B cell (primary cell): ENCODE measurements at regions of chr17 and their contacts with region 1.

Region 1: DNA sequence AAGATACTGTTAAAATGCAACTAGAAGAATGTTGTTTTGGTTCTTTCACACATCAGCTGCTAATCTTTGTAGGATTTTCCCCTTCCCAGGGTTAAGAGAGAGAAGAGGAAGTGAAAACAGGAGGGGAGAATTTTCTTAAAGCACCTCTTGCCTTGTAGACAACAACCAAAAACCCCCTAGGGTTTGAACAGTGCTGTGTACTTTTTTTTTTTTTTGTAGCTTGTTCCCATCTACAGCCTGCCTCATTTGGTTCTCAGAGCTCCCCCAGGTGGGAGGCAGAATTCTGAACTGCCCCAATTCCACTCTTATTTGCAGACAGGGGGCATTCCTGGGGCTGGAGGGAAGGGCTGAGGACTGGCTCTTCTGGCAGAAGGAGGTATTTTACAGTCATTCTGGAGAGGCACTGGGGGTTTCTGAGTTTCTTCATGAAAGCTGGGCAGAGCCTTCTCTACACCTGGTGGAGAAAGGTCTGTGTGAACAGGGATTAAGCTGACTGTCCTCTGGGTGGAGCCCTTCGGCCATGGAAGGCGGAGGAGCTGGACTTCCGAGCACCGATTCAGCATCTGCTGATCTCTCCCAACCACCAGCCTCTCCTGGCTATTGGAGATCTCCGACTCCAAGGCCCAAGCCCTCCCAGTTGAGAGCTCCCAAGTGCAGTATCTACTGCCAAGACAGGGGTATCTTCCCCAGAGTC is 32.2 kb downstream of the SMARCE1 start:
- DNase-seq: peak; percentile 92
- ATAC-seq: peak; percentile 85
- H3K4me3 ChIP-seq: peak overlapping the region in 3 of 5 experiments; percentile 12 to 27 (median 25)
- H3K4me3 Mint-ChIP-seq: peak overlapping the region; percentile 73
- H3K27ac ChIP-seq: peak overlapping the region; percentile 90 to 96
- H3K27ac Mint-ChIP-seq: peak overlapping the region; percentile 94
- H3K4me1 ChIP-seq: peaks cover 58 to 63% of the 10 kb centered on the region in 2 donors
- H3K4me1 Mint-ChIP-seq: peaks cover 68% of the 10 kb centered on the region
- H3K27me3 ChIP-seq: no peaks in the 10 kb centered on the region
- H3K27me3 Mint-ChIP-seq: no peaks in the 10 kb centered on the region
- CTCF ChIP-seq: peak; percentile 68

Region 2: GRCh38 chr17:40251576-40251975 is 363.9 kb before region 1 on chr17:
- CTCF ChIA-PET with region 1: no interaction called
- POLR2A ChIA-PET with region 1: no interaction called
- intact Hi-C with region 1: no loop called
- DNase-seq: no peak
- ATAC-seq: no peak
- H3K4me3 ChIP-seq: no peak overlapping the region
- H3K4me3 Mint-ChIP-seq: no peak overlapping the region
- H3K27ac ChIP-seq: no peak overlapping the region
- H3K27ac Mint-ChIP-seq: no peak overlapping the region
- H3K4me1 ChIP-seq: no peaks in the 10 kb centered on the region
- H3K4me1 Mint-ChIP-seq: peaks cover 16% of the 10 kb centered on the region
- H3K27me3 ChIP-seq: no peaks in the 10 kb centered on the region
- H3K27me3 Mint-ChIP-seq: no peaks in the 10 kb centered on the region
- CTCF ChIP-seq: no peak

Region 3: GRCh38 chr17:40399185-40399584 is 216.3 kb before region 1 on chr17:
- CTCF ChIA-PET with region 1: interaction called, 14 read pairs
- POLR2A ChIA-PET with region 1: no interaction called
- intact Hi-C with region 1: no loop called
- DNase-seq: peak; percentile 74
- ATAC-seq: peak; percentile 54
- H3K4me3 ChIP-seq: no peak overlapping the region
- H3K4me3 Mint-ChIP-seq: no peak overlapping the region
- H3K27ac ChIP-seq: no peak overlapping the region
- H3K27ac Mint-ChIP-seq: no peak overlapping the region
- H3K4me1 ChIP-seq: peaks cover 0 to 8% of the 10 kb centered on the region in 2 donors
- H3K4me1 Mint-ChIP-seq: peaks cover 7% of the 10 kb centered on the region
- H3K27me3 ChIP-seq: no peaks in the 10 kb centered on the region
- H3K27me3 Mint-ChIP-seq: no peaks in the 10 kb centered on the region
- CTCF ChIP-seq: peak; percentile 88

Region 4: DNA sequence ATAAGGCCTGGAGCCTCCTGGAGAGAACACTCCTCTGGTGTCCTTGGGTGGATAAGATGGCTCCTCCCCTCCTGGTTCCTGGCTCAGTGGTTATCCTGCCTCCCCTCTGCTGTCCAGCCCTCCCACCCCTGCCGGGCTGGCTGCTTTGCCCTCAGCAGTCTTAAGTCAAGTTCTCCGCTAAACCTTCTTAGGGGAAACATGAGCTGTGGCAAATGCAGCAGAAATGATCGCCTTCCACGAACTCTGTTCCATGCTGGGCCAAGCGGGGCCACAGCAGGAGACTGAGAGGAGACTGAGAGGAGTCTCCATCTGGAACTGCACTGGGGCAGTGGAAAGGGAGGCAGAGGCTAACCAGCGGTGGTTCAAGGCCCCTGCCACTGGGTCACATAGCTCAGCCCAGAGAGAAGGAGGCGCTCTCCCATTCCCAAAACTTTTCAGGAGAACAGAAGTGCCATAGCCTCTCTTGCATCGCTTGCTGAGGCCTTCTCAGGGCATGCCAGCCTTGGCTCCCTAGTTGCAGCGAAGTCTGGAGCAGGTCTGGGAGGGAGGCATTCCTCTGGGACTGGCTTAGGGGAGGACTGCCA is 140.9 kb before region 1 on chr17:
- CTCF ChIA-PET with region 1: interaction called, 12 read pairs
- POLR2A ChIA-PET with region 1: no interaction called
- intact Hi-C with region 1: no loop called
- DNase-seq: no peak
- ATAC-seq: no peak
- H3K4me3 ChIP-seq: no peak overlapping the region
- H3K4me3 Mint-ChIP-seq: no peak overlapping the region
- H3K27ac ChIP-seq: no peak overlapping the region
- H3K27ac Mint-ChIP-seq: no peak overlapping the region
- H3K4me1 ChIP-seq: peaks cover 12 to 23% of the 10 kb centered on the region in 2 donors
- H3K4me1 Mint-ChIP-seq: peaks cover 10% of the 10 kb centered on the region
- H3K27me3 ChIP-seq: peaks cover 0 to 4% (median 1%) of the 10 kb centered on the region in 4 experiments
- H3K27me3 Mint-ChIP-seq: no peaks in the 10 kb centered on the region
- CTCF ChIP-seq: no peak

Region 5: GRCh38 chr17:40542558-40543411 is 72.7 kb before region 1 on chr17:
- CTCF ChIA-PET with region 1: interaction called, 634 read pairs
- POLR2A ChIA-PET with region 1: interaction called, 29 read pairs
- intact Hi-C with region 1: loop called (anchors 1 kb)
- DNase-seq: peak; percentile 71
- ATAC-seq: peak; percentile 11
- H3K4me3 ChIP-seq: no peak overlapping the region
- H3K4me3 Mint-ChIP-seq: peak overlapping the region; percentile 63
- H3K27ac ChIP-seq: peak overlapping the region in 1 of 2 donors; percentile 30
- H3K27ac Mint-ChIP-seq: peak overlapping the region; percentile 89
- H3K4me1 ChIP-seq: peaks cover 48 to 61% of the 10 kb centered on the region in 2 donors
- H3K4me1 Mint-ChIP-seq: peaks cover 64% of the 10 kb centered on the region
- H3K27me3 ChIP-seq: no peaks in the 10 kb centered on the region
- H3K27me3 Mint-ChIP-seq: no peaks in the 10 kb centered on the region
- CTCF ChIP-seq: no peak

Region 6: GRCh38 chr17:40564883-40565768 is 50.3 kb before region 1 on chr17 and contains the start of gene CCR7:
- CTCF ChIA-PET with region 1: interaction called, 634 read pairs
- POLR2A ChIA-PET with region 1: interaction called, 132 read pairs
- intact Hi-C with region 1: loop called (anchors 1 kb)
- DNase-seq: peak; percentile 92
- ATAC-seq: peak; percentile 69
- H3K4me3 ChIP-seq: peak within 1 kb of the TSS; percentile 63 to 94 (median 89)
- H3K4me3 Mint-ChIP-seq: peak within 1 kb of the TSS; percentile 92
- H3K27ac ChIP-seq: peak within 1 kb of the TSS; percentile 92 to 98
- H3K27ac Mint-ChIP-seq: peak within 1 kb of the TSS; percentile 94
- H3K4me1 ChIP-seq: peaks cover 58 to 67% of the 10 kb centered on the region in 2 donors
- H3K4me1 Mint-ChIP-seq: peaks cover 51% of the 10 kb centered on the region
- H3K27me3 ChIP-seq: no peaks in the 10 kb centered on the region
- H3K27me3 Mint-ChIP-seq: no peaks in the 10 kb centered on the region
- CTCF ChIP-seq: no peak
- total RNA-seq, gene CCR7: 451 and 481 TPM in 2 replicates

Region 7: DNA sequence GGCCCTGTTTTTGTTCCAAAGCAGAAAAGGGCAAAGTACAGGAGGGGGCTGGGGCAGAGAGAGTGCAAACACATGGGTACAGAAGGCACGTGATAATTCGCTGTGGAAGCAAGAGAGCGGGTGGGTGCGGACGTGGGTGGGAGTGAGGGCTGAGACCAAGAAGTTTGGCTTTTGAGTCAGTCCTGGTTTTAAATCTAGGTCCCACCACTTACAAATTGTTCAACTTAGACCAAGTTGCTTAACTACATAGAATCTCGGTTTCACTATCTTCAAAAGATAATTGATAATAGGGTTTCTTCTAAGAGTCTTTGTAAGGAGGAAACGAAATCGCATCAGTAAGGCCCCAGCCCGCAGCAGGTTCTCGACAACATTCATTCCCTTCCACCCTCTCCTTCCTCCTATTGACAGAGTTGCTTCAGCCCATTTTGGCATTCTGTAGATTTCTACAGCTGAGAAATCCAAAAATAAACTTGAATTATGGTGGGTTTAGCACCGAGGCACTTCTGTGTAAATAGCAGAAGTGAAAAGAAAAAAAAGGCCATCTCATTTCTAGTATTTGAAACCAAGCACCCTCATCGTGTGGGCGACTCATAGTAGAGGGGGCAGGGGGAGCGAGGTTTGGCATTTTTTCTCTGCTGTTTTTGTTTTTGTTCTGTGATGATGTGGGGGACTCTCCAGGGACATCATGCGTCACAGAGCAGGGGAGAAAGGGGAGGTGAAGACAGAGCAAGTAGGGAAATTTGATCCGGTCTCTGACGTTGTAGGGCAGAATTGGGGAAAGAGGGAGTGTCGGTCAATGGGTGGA is 16.6 kb before region 1 on chr17:
- CTCF ChIA-PET with region 1: interaction called, 45 read pairs
- POLR2A ChIA-PET with region 1: interaction called, 22 read pairs
- intact Hi-C with region 1: loop called (anchors 1 kb)
- DNase-seq: peak; percentile 97
- ATAC-seq: peak; percentile 83
- H3K4me3 ChIP-seq: peak overlapping the region in 3 of 5 experiments; percentile 12 to 37 (median 27)
- H3K4me3 Mint-ChIP-seq: peak overlapping the region; percentile 52
- H3K27ac ChIP-seq: peak overlapping the region; percentile 92 to 96
- H3K27ac Mint-ChIP-seq: peak overlapping the region; percentile 87
- H3K4me1 ChIP-seq: peaks cover 72 to 76% of the 10 kb centered on the region in 2 donors
- H3K4me1 Mint-ChIP-seq: peaks cover 85% of the 10 kb centered on the region
- H3K27me3 ChIP-seq: no peaks in the 10 kb centered on the region
- H3K27me3 Mint-ChIP-seq: no peaks in the 10 kb centered on the region
- CTCF ChIP-seq: no peak

Region 8: GRCh38 chr17:40659911-40660310 is 44.5 kb after region 1 on chr17:
- CTCF ChIA-PET with region 1: no interaction called
- POLR2A ChIA-PET with region 1: no interaction called
- intact Hi-C with region 1: no loop called
- DNase-seq: no peak
- ATAC-seq: no peak
- H3K4me3 ChIP-seq: no peak overlapping the region
- H3K4me3 Mint-ChIP-seq: no peak overlapping the region
- H3K27ac ChIP-seq: no peak overlapping the region
- H3K27ac Mint-ChIP-seq: no peak overlapping the region
- H3K4me1 ChIP-seq: peaks cover 2 to 4% of the 10 kb centered on the region in 2 donors
- H3K4me1 Mint-ChIP-seq: peaks cover 3% of the 10 kb centered on the region
- H3K27me3 ChIP-seq: peaks cover 2 to 22% (median 11%) of the 10 kb centered on the region in 4 experiments
- H3K27me3 Mint-ChIP-seq: peaks cover 33% of the 10 kb centered on the region
- CTCF ChIP-seq: no peak

Region 9: DNA sequence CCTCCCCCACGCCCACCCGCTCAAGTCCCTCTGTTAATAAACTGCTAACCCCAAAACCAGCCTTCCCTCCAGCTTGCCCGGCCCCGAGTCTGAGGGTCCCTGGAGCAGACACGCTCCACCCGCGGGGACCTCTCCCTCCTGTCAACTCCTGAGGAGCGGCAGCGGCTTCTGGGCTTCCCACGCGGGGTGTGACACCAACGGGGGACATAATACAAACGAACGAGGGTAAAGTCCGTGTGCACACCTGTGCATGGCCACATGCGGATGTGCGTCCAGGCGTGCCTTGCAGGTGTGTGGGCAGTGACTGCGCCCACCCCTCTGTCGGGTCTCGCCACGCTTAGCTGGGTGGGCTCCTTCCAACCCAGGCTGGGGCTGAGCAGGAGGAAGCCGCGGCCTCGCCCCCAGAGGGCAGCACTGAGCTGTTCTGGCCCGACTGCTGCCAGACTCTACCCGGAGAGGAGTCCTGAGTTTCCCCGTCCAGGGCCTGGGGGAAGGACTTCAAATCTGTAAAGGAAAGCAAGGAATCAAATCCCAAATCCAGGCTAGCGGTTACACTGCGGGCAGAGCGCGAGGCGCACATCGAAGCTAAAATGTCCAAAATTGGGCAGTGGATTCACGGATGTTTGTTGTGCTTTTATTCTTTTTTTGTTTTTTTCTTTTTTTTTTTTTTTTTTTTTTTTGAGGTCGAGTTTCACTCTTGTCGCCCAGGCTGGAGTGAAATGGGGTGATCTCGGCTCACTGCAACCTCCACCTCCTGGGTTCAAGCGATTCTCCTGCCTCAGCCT is 1033.2 kb after region 1 on chr17:
- CTCF ChIA-PET with region 1: interaction called, 13 read pairs
- POLR2A ChIA-PET with region 1: no interaction called
- intact Hi-C with region 1: loop called (anchors 5 kb)
- DNase-seq: peak; percentile 90
- ATAC-seq: peak; percentile 92
- H3K4me3 ChIP-seq: peak overlapping the region; percentile 23 to 74 (median 55)
- H3K4me3 Mint-ChIP-seq: peak overlapping the region; percentile 60
- H3K27ac ChIP-seq: peak overlapping the region in 1 of 2 donors; percentile 17
- H3K27ac Mint-ChIP-seq: peak overlapping the region; percentile 51
- H3K4me1 ChIP-seq: peaks cover 9 to 18% of the 10 kb centered on the region in 2 donors
- H3K4me1 Mint-ChIP-seq: peaks cover 12% of the 10 kb centered on the region
- H3K27me3 ChIP-seq: peaks cover 0 to 5% (median 1%) of the 10 kb centered on the region in 4 experiments
- H3K27me3 Mint-ChIP-seq: no peaks in the 10 kb centered on the region
- CTCF ChIP-seq: peak; percentile 74